ENCODE measurements at regions of chr4 and their contacts with region 1.

Region 1: GRCh38 chr4:109532182-109532581 is 27.9 kb upstream of the MCUB start:
- DNase-seq: no peak
- ATAC-seq: no peak
- H3K4me3 ChIP-seq: no peak overlapping the region
- H3K4me3 Mint-ChIP-seq: no peak overlapping the region
- H3K27ac ChIP-seq: no peak overlapping the region
- H3K27ac Mint-ChIP-seq: peak overlapping the region; percentile 22
- H3K4me1 ChIP-seq: no peaks in the 10 kb centered on the region
- H3K4me1 Mint-ChIP-seq: no peaks in the 10 kb centered on the region
- H3K27me3 ChIP-seq: no peaks in the 10 kb centered on the region
- H3K27me3 Mint-ChIP-seq: no peaks in the 10 kb centered on the region
- CTCF ChIP-seq: no peak

Region 2: DNA sequence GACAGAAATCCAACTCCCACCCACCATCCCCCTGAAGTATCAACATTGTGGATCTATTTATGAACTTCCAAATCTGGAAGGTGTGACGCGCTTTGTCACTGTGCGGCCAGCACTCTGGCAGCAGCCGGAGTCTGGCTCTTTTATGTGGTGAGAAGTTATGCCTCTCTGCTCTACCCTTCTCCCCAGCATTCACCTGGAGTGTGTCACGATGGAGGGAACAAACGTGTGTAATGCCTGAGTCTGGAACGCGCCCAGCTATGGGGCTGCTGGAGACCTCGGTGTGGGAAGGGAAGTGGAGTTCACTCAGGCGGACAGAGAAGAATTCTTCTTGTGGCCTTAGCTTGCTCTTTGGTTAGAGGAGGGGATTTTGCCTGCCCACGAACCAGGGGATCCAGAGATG is 1133.9 kb before region 1 on chr4:
- CTCF ChIA-PET with region 1: no interaction called
- POLR2A ChIA-PET with region 1: no interaction called
- intact Hi-C with region 1: no loop called
- DNase-seq: peak in 2 of 9 experiments; percentile 11 to 14
- ATAC-seq: no peak
- H3K4me3 ChIP-seq: no peak overlapping the region
- H3K4me3 Mint-ChIP-seq: no peak overlapping the region
- H3K27ac ChIP-seq: no peak overlapping the region
- H3K27ac Mint-ChIP-seq: no peak overlapping the region
- H3K4me1 ChIP-seq: peaks cover 3% of the 10 kb centered on the region
- H3K4me1 Mint-ChIP-seq: peaks cover 10% of the 10 kb centered on the region
- H3K27me3 ChIP-seq: no peaks in the 10 kb centered on the region
- H3K27me3 Mint-ChIP-seq: no peaks in the 10 kb centered on the region
- CTCF ChIP-seq: no peak

Region 3: DNA sequence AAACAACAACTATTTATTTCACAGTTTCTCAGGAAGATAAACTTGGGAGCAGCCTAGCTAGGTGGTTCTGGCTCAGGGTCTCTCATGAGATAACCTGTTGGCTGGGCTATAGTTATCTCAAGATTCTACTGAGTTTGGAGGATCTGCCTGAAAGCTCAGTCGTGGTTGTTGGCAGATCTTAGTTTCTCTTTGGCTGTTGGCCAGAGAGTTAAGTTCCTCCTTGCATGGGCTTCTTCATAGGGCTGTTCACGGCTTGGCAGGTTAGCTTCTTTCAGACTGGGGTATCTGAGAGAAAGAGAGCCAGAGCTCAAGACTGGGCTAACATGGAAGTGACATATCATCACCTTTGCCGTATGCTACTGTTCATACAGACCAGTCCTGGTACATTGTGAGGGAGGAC is 69.9 kb before region 1 on chr4:
- CTCF ChIA-PET with region 1: no interaction called
- POLR2A ChIA-PET with region 1: no interaction called
- intact Hi-C with region 1: no loop called
- DNase-seq: no peak
- ATAC-seq: no peak
- H3K4me3 ChIP-seq: no peak overlapping the region
- H3K4me3 Mint-ChIP-seq: no peak overlapping the region
- H3K27ac ChIP-seq: no peak overlapping the region
- H3K27ac Mint-ChIP-seq: peak overlapping the region; percentile 37
- H3K4me1 ChIP-seq: peaks cover 10% of the 10 kb centered on the region
- H3K4me1 Mint-ChIP-seq: peaks cover 50% of the 10 kb centered on the region
- H3K27me3 ChIP-seq: no peaks in the 10 kb centered on the region
- H3K27me3 Mint-ChIP-seq: no peaks in the 10 kb centered on the region
- CTCF ChIP-seq: no peak

Region 4: GRCh38 chr4:109497511-109497910 is 34.7 kb before region 1 on chr4:
- CTCF ChIA-PET with region 1: no interaction called
- POLR2A ChIA-PET with region 1: no interaction called
- intact Hi-C with region 1: loop called in 1 of 2 experiments (anchors 5 kb)
- DNase-seq: no peak
- ATAC-seq: no peak
- H3K4me3 ChIP-seq: no peak overlapping the region
- H3K4me3 Mint-ChIP-seq: no peak overlapping the region
- H3K27ac ChIP-seq: no peak overlapping the region
- H3K27ac Mint-ChIP-seq: peak overlapping the region; percentile 27
- H3K4me1 ChIP-seq: no peaks in the 10 kb centered on the region
- H3K4me1 Mint-ChIP-seq: peaks cover 3% of the 10 kb centered on the region
- H3K27me3 ChIP-seq: no peaks in the 10 kb centered on the region
- H3K27me3 Mint-ChIP-seq: no peaks in the 10 kb centered on the region
- CTCF ChIP-seq: no peak

Region 5: DNA sequence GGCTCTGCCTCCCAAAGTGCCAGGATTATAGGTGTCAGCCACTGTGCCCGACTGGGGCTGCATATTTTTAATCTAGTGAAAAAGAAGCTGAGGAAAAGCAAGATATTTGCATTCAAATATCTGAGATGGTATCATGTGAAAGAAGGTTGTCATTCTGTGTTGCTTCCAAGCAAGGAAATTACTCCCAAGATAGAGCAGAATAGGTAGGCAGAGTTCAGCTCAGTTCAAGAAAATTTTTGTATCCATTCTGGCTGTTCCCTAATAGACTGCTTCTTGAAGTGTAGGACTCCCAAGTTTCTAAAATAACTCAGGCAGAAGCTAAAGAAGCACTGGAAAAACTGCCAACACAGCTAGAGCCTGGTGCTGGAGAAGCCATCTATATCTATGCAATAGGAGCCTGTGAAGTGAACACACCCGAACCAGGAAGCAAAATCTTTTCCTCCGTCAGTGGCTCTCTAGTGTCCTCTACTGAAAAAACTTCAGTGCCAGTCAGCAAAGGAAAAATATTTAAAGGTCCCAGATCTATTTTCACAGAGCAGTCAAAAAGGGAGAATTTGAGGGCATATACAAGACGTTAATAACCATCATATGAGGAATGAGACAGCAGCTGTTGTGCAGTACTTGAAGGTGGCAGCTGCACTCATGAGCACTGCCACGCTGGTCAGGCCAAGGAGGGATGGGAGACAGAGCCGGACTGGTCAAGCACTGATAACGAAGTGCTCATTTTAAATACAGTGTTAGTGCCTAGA is 42.1 kb after region 1 on chr4:
- CTCF ChIA-PET with region 1: no interaction called
- POLR2A ChIA-PET with region 1: no interaction called
- intact Hi-C with region 1: loop called (anchors 5 kb)
- DNase-seq: peak in 2 of 9 experiments; percentile 36 to 52
- ATAC-seq: peak; percentile 64
- H3K4me3 ChIP-seq: no peak overlapping the region
- H3K4me3 Mint-ChIP-seq: peak overlapping the region; percentile 37
- H3K27ac ChIP-seq: no peak overlapping the region
- H3K27ac Mint-ChIP-seq: peak overlapping the region; percentile 67
- H3K4me1 ChIP-seq: peaks cover 45% of the 10 kb centered on the region
- H3K4me1 Mint-ChIP-seq: peaks cover 74% of the 10 kb centered on the region
- H3K27me3 ChIP-seq: no peaks in the 10 kb centered on the region
- H3K27me3 Mint-ChIP-seq: no peaks in the 10 kb centered on the region
- CTCF ChIP-seq: peak; percentile 18

Region 6: GRCh38 chr4:109826719-109827118 is 294.5 kb after region 1 on chr4:
- CTCF ChIA-PET with region 1: interaction called, 4 read pairs
- POLR2A ChIA-PET with region 1: no interaction called
- intact Hi-C with region 1: loop called in 1 of 2 experiments (anchors 10 kb)
- DNase-seq: peak in 2 of 9 experiments; percentile 24 to 46
- ATAC-seq: peak; percentile 65
- H3K4me3 ChIP-seq: no peak overlapping the region
- H3K4me3 Mint-ChIP-seq: no peak overlapping the region
- H3K27ac ChIP-seq: no peak overlapping the region
- H3K27ac Mint-ChIP-seq: no peak overlapping the region
- H3K4me1 ChIP-seq: no peaks in the 10 kb centered on the region
- H3K4me1 Mint-ChIP-seq: peaks cover 2% of the 10 kb centered on the region
- H3K27me3 ChIP-seq: no peaks in the 10 kb centered on the region
- H3K27me3 Mint-ChIP-seq: no peaks in the 10 kb centered on the region
- CTCF ChIP-seq: peak; percentile 84

Measured in CD8-positive, alpha-beta T cell (primary cell).